Dendritic cell treated with granulocyte-macrophage colony-stimulating factor and Interleukin-4, amounts not matched to agents 40 ng/mL and 50 ng/mL, for 4 days (primary cell): ENCODE measurements at regions of chr6 and their contacts with region 1.

Region 1: DNA sequence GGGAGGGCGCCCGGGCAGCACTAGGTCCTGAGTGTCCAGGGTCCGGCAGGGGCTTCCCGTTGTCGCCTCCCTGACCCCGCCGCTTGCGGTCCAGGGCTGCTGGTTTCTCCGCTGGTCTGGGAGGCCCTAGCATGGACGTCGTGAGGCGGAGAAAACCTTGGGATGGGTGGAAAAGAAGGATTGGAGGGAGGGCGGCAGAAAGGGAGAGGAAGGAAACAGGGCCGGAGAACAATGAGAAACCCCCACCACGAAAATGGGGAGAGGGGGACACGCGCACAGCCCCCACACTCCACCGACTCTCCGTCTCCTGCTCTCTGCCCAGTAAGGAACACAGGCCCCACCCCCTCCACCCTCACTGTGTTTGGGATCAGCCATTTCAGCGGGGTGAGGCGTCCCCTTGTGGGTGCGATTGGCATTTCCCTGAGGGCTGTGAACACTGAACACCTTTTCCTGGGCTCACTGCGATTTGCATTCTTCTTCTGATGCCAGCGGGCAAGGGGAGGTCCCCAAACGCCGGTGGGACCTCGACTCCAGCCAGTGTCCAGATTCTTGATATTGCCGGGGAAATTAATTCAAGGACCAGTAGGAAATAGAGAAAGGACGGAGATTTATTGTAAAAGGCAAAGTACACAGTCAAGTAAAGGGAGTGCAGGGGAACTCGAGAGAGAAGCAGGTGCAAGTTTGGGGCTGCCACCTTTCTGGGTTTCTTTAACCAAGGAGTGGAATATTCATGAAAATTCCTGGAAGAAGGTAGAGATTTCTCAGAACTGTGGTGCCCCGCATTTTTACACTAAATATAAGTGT is 3.3 kb upstream of the RAET1G start:
- H3K4me3 Mint-ChIP-seq: peak overlapping the region; percentile 78
- H3K27ac Mint-ChIP-seq: peak overlapping the region; percentile 45
- H3K4me1 Mint-ChIP-seq: peaks cover 33% of the 10 kb centered on the region
- H3K27me3 Mint-ChIP-seq: peaks cover 90% of the 10 kb centered on the region

Region 2: DNA sequence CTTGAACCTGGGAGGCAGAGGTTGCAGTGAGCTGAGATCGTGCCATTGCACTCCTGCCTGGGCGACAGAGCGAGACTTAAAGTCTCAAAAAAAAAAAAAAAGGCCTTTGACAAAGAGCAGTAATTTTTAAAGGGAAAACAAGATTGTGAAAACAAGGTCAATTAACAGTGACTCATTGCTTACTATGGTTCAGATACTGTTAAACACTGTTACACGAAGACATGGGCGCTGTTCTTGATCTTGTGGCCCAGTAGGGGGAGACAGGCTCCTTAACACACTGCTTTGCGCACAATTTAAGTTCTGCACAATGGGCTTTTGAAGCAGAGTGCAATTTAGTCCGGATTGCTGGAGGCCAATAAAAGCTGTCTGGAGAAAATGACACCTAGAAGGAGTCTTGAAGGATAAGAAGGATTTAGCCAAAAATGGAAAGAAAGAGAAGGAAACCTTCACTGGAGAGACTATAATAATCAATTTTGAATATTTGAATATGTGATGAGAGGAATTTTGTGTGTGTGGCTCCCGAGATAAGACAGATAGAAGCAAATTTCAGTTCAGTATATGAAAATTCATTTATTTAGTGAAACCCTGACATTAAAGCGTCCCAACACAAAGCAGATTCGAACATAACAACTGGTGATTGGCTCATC is 202.3 kb before region 1 on chr6:
- intact Hi-C with region 1: loop called (anchors 5 kb)
- H3K4me3 Mint-ChIP-seq: no peak overlapping the region
- H3K27ac Mint-ChIP-seq: peak overlapping the region; percentile 38
- H3K4me1 Mint-ChIP-seq: peaks cover 23% of the 10 kb centered on the region
- H3K27me3 Mint-ChIP-seq: no peaks in the 10 kb centered on the region

Region 3: DNA sequence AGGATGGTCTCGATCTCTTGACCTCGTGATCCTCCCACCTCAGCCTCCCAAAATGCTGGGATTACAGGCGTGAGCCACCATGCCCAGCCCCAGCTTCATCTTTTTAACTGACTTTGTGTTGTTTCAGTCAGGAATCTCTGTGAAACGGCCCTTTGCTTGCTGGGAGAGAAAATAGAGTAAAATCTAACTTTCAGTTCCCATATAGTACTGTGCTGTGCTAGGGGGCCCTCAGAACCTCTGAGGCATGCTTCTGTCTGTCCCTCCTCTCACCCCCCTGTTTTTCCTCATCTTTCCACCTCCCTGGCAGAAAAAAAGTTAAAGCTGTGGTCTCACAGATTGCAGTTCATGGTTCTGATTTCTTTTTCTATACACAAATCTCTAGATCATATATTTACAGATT is 110.4 kb before region 1 on chr6:
- intact Hi-C with region 1: no loop called
- H3K4me3 Mint-ChIP-seq: no peak overlapping the region
- H3K27ac Mint-ChIP-seq: no peak overlapping the region
- H3K4me1 Mint-ChIP-seq: no peaks in the 10 kb centered on the region
- H3K27me3 Mint-ChIP-seq: no peaks in the 10 kb centered on the region

Region 4: DNA sequence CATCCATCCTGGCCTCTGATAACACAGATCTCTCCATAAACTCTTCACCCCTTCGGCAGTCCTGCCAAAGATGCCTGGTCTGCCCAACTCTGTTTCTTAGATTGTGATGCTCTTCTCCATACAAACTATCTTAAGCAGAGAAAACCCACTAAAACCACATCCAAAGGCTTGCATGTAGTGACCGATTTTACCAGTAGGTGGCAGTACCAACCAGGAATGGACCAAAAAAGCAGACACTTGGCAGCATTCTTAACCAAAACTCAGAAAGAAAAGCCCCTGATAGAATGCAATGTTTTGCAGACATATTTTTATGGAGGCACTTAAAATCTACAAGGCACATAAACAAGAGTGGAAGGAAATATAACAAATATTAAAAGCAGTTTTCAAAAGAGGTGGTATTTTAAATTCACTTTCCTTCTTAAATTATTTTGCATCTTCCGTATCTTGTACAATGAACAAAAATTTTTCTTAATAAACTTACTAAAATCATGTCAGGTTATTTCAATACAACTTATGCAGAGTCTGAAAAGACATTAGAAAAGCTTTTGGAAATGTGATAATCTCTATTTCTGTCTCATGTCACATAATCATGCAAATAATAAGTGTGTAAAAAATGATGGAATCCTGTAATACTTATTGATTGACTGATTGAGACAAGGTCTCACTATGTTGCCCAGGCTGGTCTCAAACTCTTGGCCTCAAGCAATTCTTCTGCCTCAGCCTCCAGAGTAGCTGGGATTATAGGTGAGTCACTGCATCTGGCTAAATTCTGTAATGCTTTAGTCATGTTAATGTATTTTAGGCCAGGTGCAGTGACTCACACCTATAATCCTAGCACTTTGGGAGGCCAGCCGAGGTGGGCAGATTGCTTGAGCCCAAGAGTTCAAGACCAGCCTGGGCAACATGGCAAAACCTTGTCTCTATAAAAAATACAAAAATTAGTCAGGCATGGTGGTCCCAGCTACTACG is 91.4 kb before region 1 on chr6:
- intact Hi-C with region 1: loop called (anchors 1 kb)
- H3K4me3 Mint-ChIP-seq: no peak overlapping the region
- H3K27ac Mint-ChIP-seq: no peak overlapping the region
- H3K4me1 Mint-ChIP-seq: no peaks in the 10 kb centered on the region
- H3K27me3 Mint-ChIP-seq: no peaks in the 10 kb centered on the region

Region 5: DNA sequence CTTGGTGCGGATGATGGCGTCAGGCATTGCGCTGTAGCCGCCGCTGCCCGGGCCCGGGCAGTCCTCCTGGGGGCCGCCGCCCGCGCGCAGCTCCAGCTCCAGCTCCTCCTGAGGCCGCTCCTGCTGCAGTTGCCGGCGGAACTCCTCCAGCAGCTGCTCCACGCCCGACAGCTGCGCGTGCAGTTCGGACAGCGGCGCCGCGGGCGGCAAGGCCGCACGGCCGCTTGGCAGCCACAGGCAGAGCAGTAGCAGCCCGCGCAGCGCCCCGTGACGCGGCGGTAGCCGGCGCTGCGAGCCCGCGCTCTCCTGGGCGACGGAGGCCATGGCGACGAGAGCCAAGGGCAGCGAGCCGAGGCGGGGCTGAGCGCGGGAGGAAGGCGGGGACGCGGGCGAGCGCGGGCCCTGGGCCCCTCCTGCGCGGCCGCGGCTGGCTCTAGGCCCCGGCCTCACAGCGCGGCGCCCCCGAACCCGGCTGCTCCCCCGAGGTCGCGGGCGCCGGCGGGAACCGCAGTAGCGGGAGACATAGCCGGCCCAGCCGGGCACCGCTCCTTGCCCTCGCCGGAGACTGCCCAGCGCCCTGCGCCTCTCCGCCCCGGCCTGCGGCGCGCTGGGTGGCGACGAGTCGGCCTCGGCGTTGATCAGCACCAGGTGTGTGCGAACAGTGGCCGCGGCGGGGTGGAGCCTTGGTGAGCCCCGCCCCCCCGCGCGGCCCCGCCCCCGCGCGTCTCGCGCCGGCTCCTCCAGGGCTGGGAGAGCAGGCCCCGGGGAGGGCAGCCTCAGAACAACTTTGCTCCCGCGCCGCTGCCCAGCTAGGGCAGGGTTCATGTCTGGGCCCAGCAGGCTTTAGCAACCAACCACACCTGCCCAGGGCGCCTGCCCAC is 62.2 kb before region 1 on chr6 and contains the start of gene LRP11:
- intact Hi-C with region 1: loop called (anchors 2 kb)
- H3K4me3 Mint-ChIP-seq: peak within 1 kb of the TSS; percentile 82
- H3K27ac Mint-ChIP-seq: peak within 1 kb of the TSS; percentile 85
- H3K4me1 Mint-ChIP-seq: peaks cover 19% of the 10 kb centered on the region
- H3K27me3 Mint-ChIP-seq: peaks cover 7% of the 10 kb centered on the region

Region 6: GRCh38 chr6:150016324-150017185 is 90.4 kb after region 1 on chr6:
- intact Hi-C with region 1: no loop called
- H3K4me3 Mint-ChIP-seq: no peak overlapping the region
- H3K27ac Mint-ChIP-seq: no peak overlapping the region
- H3K4me1 Mint-ChIP-seq: peaks cover 14% of the 10 kb centered on the region
- H3K27me3 Mint-ChIP-seq: peaks cover 74% of the 10 kb centered on the region